WTC11 (cell line): ENCODE measurements at regions of chr22 and their contacts with region 1.

Region 1: DNA sequence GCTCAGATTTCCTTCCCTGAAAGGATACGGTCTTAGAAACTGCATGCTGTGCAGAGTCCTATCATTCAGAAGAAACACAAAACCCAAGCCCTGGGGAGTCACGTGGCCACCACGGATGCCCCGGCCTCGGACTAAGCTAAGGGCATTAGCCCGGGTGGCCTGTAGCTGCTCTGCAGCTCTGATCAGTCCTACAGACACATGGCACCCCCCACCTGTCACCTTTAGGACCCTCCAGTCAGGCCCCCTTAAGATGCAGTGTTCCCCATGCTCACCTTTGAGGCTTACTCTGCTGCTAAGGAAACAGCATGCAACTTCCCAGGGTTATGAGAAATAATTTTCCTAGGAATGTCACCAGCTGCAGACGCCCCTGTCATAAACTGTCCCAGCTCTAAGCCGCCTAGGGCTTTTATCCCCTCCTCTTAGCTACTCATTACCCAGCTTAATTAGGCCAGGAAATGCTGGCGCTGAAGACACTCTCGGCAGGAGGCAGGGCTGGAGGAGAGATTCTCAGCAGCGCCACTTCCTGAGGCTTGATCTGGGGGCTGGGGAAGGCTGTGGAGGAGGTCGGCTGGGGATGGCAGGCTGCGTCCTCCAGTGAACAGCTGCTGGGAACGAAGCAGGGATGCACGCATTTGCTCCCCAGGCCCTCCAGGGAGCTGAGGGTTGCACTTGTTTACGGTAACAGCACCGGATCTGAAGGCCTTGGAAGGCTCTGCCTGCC is 47.2 kb upstream of the ADA2 start:
- DNase-seq: peak; percentile 81
- ATAC-seq: peak; percentile 66
- H3K4me3 Mint-ChIP-seq: peak overlapping the region; percentile 69
- H3K27ac Mint-ChIP-seq: peak overlapping the region; percentile 96
- H3K4me1 Mint-ChIP-seq: peaks cover 90% of the 10 kb centered on the region
- H3K27me3 Mint-ChIP-seq: no peaks in the 10 kb centered on the region
- CTCF ChIP-seq: no peak

Region 2: GRCh38 chr22:17164392-17165024 is 101.9 kb before region 1 on chr22:
- CTCF ChIA-PET with region 1: interaction called, 12 read pairs
- POLR2A ChIA-PET with region 1: no interaction called
- DNase-seq: peak; percentile 21
- ATAC-seq: peak; percentile 81
- H3K4me3 Mint-ChIP-seq: no peak overlapping the region
- H3K27ac Mint-ChIP-seq: no peak overlapping the region
- H3K4me1 Mint-ChIP-seq: peaks cover 6% of the 10 kb centered on the region
- H3K27me3 Mint-ChIP-seq: peaks cover 8% of the 10 kb centered on the region
- CTCF ChIP-seq: peak; percentile 44

Region 3: GRCh38 chr22:17222503-17222902 is 43.9 kb before region 1 on chr22:
- CTCF ChIA-PET with region 1: no interaction called
- POLR2A ChIA-PET with region 1: no interaction called
- DNase-seq: no peak
- ATAC-seq: no peak
- H3K4me3 Mint-ChIP-seq: no peak overlapping the region
- H3K27ac Mint-ChIP-seq: 0 out of 2 replicates have a peak overlapping the region, but pooled peaks have one; percentile 48
- H3K4me1 Mint-ChIP-seq: peaks cover 23% of the 10 kb centered on the region
- H3K27me3 Mint-ChIP-seq: no peaks in the 10 kb centered on the region
- CTCF ChIP-seq: no peak

Region 4: DNA sequence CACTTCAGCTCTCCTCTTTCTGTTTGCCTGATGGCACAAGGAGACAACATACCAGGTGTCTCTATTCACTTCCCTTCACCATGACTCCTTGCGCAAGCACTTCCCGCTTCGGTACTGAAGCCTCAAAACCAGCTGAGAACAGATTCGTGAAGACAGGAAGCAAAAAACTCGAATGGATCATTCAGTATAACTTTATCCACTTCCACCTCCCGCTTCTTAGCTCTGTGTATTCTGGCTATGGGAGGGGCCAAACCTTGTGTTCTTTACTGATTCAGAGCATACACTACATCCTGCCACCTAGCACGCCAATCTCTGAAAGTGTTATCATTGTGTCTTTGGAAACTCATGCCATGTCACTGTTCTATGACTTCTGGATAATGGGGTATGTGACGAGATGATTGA is 15.0 kb after region 1 on chr22:
- CTCF ChIA-PET with region 1: interaction called, 14 read pairs
- POLR2A ChIA-PET with region 1: no interaction called
- DNase-seq: no peak
- ATAC-seq: no peak
- H3K4me3 Mint-ChIP-seq: no peak overlapping the region
- H3K27ac Mint-ChIP-seq: 0 out of 2 replicates have a peak overlapping the region, but pooled peaks have one; percentile 33
- H3K4me1 Mint-ChIP-seq: peaks cover 14% of the 10 kb centered on the region
- H3K27me3 Mint-ChIP-seq: no peaks in the 10 kb centered on the region
- CTCF ChIP-seq: no peak

Region 5: DNA sequence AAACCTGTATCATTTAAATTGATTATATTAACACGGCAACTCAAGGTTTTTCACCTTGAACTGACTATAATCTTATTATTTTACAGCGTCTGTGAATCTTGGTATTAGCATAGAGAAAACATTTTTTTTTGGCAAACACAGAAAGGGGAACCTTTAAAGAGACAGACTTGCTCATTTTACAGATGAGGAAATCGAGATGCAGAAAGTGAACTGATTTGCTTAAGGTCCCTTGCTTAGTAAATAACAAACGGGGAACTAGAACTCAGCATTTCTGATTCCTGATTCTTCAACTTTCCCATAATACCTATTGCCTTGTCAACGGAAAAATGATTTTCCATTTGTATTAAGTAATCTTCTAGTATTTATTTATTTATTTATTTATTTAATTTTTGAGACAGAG is 69.7 kb after region 1 on chr22:
- CTCF ChIA-PET with region 1: no interaction called
- POLR2A ChIA-PET with region 1: no interaction called
- DNase-seq: no peak
- ATAC-seq: no peak
- H3K4me3 Mint-ChIP-seq: no peak overlapping the region
- H3K27ac Mint-ChIP-seq: no peak overlapping the region
- H3K4me1 Mint-ChIP-seq: peaks cover 9% of the 10 kb centered on the region
- H3K27me3 Mint-ChIP-seq: no peaks in the 10 kb centered on the region
- CTCF ChIP-seq: no peak